ENCODE measurements at regions of chr10 and their contacts with region 1.

Region 1: DNA sequence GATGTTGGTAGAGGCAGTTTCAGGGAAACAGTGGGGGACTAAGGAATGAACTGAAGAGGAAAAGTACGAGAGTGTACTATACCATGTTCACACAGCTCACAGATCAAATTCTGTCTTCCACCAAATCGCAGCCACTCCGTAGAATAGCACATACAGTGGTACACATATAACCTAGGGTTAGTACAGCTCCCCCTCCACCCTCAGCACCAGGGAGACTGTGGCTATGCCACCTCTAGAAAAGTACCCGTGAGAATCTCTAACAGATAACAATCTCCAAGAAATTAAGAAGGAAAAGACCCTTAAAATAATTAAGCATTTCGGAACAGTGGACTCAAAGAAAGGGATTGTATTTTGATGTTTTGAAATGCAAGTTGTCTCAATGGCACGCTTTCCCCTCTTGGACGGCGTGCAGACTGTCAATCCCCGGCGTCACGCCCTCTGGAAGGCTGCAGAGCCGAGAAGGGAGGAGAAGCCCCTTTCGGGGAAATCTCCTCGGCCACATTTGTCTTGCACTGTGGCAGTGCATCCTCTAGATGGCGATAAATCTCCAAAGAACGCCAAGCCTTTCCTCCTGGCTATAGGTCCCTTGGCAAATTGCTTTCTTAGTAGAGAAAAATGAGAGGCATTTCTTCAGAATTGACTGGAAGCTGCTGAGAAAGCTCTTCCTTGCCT is 345.0 kb downstream of the REEP3 start:
- DNase-seq: peak; percentile 46
- H3K4me3 ChIP-seq: no peak overlapping the region
- H3K27ac ChIP-seq: no peak overlapping the region
- H3K4me1 ChIP-seq: no peaks in the 10 kb centered on the region
- CTCF ChIP-seq: peak; percentile 86

Region 2: DNA sequence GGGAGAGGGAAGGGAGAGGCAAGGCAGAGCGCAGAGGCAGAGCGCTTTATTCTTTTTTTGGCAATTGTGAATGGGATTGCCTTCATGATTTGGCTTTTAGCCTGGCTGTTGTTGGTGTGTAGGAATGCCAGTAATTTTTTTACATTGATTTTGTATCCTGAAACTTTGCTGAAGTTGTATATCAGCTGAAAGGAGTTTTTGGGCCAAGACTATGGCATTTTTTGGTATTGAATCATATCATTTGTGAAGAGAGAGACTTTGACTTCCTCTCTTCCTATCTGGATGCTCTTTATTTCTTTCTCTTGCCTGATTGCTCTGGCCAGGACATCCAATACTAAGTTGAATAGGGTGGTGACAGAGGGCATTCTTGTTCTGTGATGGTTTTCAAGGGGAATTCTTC is 53.7 kb before region 1 on chr10:
- CTCF ChIA-PET with region 1: no interaction called
- POLR2A ChIA-PET with region 1: no interaction called
- intact Hi-C with region 1: no loop called
- DNase-seq: no peak
- H3K4me3 ChIP-seq: no peak overlapping the region
- H3K27ac ChIP-seq: no peak overlapping the region
- H3K4me1 ChIP-seq: no peaks in the 10 kb centered on the region
- CTCF ChIP-seq: no peak

Region 3: DNA sequence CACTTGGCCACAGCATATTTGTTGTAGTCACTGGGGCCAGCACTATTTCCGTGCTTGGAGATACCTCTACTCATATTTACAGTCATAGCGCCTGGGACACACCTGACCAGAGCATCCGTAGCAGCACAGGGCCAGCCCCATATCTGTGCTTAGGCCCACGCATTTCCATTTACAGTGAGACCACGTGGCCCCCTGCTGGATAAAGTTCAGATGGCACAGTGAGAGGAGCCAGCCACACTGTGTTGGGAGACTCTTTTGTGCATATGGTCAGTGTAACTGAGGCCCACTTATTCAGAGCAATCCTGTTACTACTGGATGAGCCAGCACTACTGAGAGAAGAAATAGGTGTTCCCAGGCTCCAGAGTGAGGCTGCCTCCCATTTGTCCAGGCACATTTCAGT is 110.3 kb after region 1 on chr10:
- CTCF ChIA-PET with region 1: interaction called, 3 read pairs
- POLR2A ChIA-PET with region 1: no interaction called
- intact Hi-C with region 1: loop called (anchors 2 kb)
- DNase-seq: peak; percentile 37
- H3K4me3 ChIP-seq: no peak overlapping the region
- H3K27ac ChIP-seq: no peak overlapping the region
- H3K4me1 ChIP-seq: no peaks in the 10 kb centered on the region
- CTCF ChIP-seq: peak; percentile 76

Region 4: DNA sequence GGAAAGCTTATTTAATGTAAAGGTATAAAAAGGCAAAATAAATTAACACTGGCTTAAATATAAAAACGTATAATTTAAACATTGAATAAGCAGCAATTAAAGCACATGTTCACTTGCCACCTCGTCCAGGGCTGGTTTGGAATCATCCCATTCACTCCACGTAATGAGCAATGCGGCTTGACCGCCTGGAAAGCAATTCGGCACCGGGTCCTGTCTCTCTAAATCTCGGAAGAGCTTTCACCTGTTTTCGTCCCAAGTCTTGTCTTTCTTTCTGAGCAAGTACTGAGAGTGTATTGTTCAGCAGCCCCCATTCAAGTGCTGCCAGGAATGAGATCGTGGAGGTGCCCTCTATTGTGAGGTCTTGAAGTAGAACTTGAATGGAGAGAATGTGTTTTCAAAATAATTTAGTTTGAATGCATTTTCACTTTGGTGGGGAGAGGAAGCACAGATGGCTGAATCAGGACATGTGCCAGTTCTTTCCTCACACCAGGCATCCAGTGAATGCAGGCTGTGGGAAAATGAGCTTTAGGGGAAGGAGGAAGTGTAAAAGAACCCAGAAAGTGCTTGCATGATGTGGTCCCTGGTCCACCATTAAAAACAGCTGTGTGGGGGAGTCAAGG is 170.2 kb after region 1 on chr10:
- CTCF ChIA-PET with region 1: no interaction called
- POLR2A ChIA-PET with region 1: no interaction called
- intact Hi-C with region 1: no loop called
- DNase-seq: no peak
- H3K4me3 ChIP-seq: no peak overlapping the region
- H3K27ac ChIP-seq: no peak overlapping the region
- H3K4me1 ChIP-seq: no peaks in the 10 kb centered on the region
- CTCF ChIP-seq: no peak